Sigmoid colon (tissue), 7 donors: ENCODE measurements at regions of chr10 and their contacts with region 1.

Region 1: DNA sequence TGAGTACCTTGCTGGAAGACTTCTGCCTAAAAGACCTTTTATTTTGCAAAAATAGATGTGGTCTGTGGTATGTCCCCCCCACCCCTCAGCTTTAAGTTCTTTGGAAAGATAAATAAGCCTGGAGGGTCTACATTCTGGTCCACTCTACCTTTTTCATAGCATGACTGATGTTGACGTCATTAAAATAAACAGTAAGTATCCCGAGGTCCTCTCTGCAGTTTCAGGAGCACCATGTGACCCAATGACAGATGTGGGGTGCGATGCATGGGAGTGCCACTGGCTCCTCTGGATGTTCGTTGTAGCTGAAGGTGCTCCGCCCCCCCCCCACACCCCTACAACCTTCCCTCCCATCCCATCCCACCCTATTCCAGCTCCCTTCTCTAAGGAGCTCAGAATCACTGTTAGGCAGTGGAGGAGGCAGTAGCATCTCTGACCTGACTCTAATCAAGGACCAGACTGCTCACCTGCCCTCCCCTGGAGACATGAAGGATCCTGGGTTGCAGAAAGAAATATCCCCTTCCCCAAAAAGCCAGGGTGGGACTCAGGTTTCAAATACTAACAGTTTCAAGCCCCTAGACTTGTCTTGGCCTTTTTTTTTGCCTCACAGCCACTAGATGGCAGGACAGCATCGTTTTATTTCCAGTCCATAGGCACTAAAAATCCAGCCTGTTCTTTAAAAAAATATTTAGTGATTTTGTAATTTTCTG is 25.1 kb downstream of the CASP7 start:
- DNase-seq: no peak
- H3K4me3 ChIP-seq: no peak overlapping the region
- H3K27ac ChIP-seq: no peak overlapping the region
- H3K4me1 ChIP-seq: peaks cover 0 to 37% (median 26%) of the 10 kb centered on the region in 4 donors
- H3K27me3 ChIP-seq: no peaks in the 10 kb centered on the region
- CTCF ChIP-seq: peak in 3 of 4 experiments; percentile 55 to 63 (median 58)
- EP300 ChIP-seq: no peak
- POLR2A ChIP-seq: no peak

Region 2: DNA sequence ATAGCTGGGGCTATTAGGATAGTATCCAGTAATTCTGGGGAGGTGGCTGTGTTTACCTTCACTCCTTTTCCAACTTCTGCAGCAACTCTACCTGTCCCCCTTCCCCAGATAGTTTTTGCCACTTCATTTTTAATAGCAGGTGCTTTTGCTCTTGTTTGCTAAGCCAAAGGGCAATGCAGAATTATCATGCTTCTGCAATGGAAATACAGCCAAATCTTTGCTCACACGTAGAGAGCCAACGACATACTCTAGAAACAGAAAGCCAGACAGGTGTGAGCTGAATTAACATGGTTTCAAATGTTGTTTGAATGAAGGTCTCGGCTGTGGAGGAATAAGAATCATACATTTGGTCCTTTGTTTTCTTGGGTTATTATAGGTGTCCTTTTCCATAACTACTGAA is 61.1 kb after region 1 on chr10:
- intact Hi-C with region 1: no loop called
- DNase-seq: no peak
- H3K4me3 ChIP-seq: no peak overlapping the region
- H3K27ac ChIP-seq: no peak overlapping the region
- H3K4me1 ChIP-seq: peaks cover 0 to 10% (median 4%) of the 10 kb centered on the region in 4 donors
- H3K27me3 ChIP-seq: no peaks in the 10 kb centered on the region
- CTCF ChIP-seq: no peak
- EP300 ChIP-seq: no peak
- POLR2A ChIP-seq: no peak

Region 3: GRCh38 chr10:113802997-113803396 is 98.2 kb after region 1 on chr10:
- intact Hi-C with region 1: loop called (anchors 5 kb)
- DNase-seq: no peak
- H3K4me3 ChIP-seq: no peak overlapping the region
- H3K27ac ChIP-seq: peak overlapping the region in 1 of 4 donors; percentile 29
- H3K4me1 ChIP-seq: peaks cover 0 to 25% (median 13%) of the 10 kb centered on the region in 4 donors
- H3K27me3 ChIP-seq: no peaks in the 10 kb centered on the region
- CTCF ChIP-seq: no peak
- EP300 ChIP-seq: no peak
- POLR2A ChIP-seq: no peak

Region 4: GRCh38 chr10:114103284-114103683 is 398.5 kb after region 1 on chr10:
- intact Hi-C with region 1: loop called (anchors 5 kb)
- DNase-seq: no peak
- H3K4me3 ChIP-seq: no peak overlapping the region
- H3K27ac ChIP-seq: no peak overlapping the region
- H3K4me1 ChIP-seq: peaks cover 0 to 19% (median 13%) of the 10 kb centered on the region in 4 donors
- H3K27me3 ChIP-seq: peaks cover 0 to 11% (median 0%) of the 10 kb centered on the region in 3 donors
- CTCF ChIP-seq: peak; percentile 19 to 53 (median 44)
- EP300 ChIP-seq: no peak
- POLR2A ChIP-seq: no peak